ENCODE measurements at regions of chr9 and their contacts with region 1.

Region 1: DNA sequence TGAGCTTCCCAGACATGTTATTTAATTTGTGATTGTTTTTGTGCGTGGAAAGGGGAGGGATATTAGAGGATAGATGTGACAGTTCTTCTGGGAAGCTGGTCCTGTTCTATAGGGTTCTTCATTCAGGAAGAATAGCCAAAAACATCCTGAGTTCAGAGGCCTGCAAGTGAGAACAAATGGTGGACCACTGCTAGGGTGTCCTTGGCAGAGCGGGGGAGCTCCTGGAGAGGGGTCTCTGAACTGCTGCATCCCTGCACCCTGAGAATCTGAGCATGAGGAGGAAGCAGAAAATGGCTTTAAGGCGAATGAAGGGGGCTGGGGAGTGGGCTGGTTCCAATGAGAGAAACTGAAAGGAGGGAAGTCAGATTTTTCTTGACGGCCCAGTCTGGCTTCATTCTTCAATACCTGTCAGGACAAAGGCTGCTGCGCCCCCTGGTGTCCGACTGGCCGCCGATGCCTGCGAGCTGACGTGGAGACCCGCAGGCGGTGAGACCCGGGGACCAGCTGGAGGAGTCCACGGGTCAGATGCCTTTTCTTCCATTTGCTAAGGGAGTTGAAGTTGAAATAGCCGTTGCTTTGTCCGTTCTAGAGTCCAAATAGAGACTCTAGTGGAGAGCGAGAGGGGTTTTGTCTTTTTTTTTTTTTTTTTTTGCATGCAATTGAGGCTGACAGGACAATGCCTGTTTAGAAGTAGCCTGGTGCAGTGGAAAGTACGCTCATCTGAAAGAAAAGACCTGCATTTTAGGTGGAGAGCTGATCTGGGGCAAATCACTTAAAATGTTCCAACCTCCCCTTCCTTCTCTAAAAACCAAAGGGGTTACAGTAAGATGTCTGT is 39.5 kb upstream of the NFIB start:
- DNase-seq: peak; percentile 89
- H3K4me3 ChIP-seq: no peak overlapping the region
- H3K27ac ChIP-seq: peak overlapping the region; percentile 2
- H3K4me1 ChIP-seq: peaks cover 45% of the 10 kb centered on the region
- H3K27me3 ChIP-seq: no peaks in the 10 kb centered on the region
- CTCF ChIP-seq: peak; percentile 95 to 97
- POLR2A ChIP-seq: no peak

Region 2: DNA sequence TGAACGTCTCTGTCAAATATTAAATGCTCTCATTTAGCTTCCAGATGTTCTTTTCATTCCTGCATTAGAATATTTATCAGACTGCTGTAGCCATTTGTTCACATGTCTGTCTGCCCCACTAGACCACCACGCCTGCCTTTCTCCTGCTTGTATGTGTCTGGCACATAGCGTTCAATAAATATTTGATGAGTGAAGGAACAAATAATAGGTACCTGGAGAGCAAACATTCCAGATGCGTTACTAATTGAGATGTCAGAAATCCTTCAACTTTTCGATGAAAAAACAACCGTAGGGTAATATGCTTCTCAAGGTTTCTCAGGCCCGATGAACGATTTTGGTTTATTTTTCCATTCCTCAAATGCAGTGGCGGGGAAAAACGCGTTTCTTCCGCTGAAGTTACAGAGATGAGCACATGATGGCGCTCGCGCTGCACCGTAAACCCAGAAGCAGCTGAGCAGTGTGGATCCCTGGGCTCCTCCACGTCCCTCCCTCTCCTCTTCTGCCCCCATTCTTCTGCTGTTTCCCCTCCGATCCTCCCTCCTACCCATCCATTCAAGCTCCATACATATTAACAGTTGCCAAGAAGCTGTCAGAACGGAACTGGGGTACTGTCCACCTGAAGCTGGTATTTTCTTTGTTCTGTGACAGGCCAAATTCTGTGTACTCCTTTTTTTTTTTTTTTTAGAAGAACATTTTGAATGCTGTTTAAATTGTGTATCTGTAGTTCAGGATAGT is 1319.3 kb before region 1 on chr9:
- CTCF ChIA-PET with region 1: interaction called, 6 read pairs
- POLR2A ChIA-PET with region 1: no interaction called
- dilution Hi-C with region 1: no loop called
- intact Hi-C with region 1: loop called (anchors 10 kb)
- DNase-seq: peak; percentile 75
- H3K4me3 ChIP-seq: no peak overlapping the region
- H3K27ac ChIP-seq: no peak overlapping the region
- H3K4me1 ChIP-seq: no peaks in the 10 kb centered on the region
- H3K27me3 ChIP-seq: no peaks in the 10 kb centered on the region
- CTCF ChIP-seq: peak; percentile 77 to 81
- POLR2A ChIP-seq: no peak

Region 3: GRCh38 chr9:13446938-13447842 is 906.2 kb before region 1 on chr9:
- CTCF ChIA-PET with region 1: interaction called, 16 read pairs
- POLR2A ChIA-PET with region 1: no interaction called
- dilution Hi-C with region 1: no loop called
- intact Hi-C with region 1: loop called (anchors 2 kb)
- DNase-seq: peak; percentile 63
- H3K4me3 ChIP-seq: peak overlapping the region in 1 of 3 experiments; percentile 18
- H3K27ac ChIP-seq: no peak overlapping the region
- H3K4me1 ChIP-seq: peaks cover 14% of the 10 kb centered on the region
- H3K27me3 ChIP-seq: no peaks in the 10 kb centered on the region
- CTCF ChIP-seq: no peak
- POLR2A ChIP-seq: no peak

Region 4: GRCh38 chr9:13750061-13750460 is 603.4 kb before region 1 on chr9:
- CTCF ChIA-PET with region 1: no interaction called
- POLR2A ChIA-PET with region 1: no interaction called
- dilution Hi-C with region 1: no loop called
- intact Hi-C with region 1: loop called (anchors 5 kb)
- DNase-seq: peak; percentile 96
- H3K4me3 ChIP-seq: no peak overlapping the region
- H3K27ac ChIP-seq: peak overlapping the region; percentile 72
- H3K4me1 ChIP-seq: peaks cover 17% of the 10 kb centered on the region
- H3K27me3 ChIP-seq: no peaks in the 10 kb centered on the region
- CTCF ChIP-seq: no peak
- POLR2A ChIP-seq: peak; percentile 49

Region 5: GRCh38 chr9:14271093-14271673 is 82.3 kb before region 1 on chr9:
- CTCF ChIA-PET with region 1: interaction called, 5 read pairs
- POLR2A ChIA-PET with region 1: no interaction called
- dilution Hi-C with region 1: no loop called
- intact Hi-C with region 1: loop called (anchors 1 kb)
- DNase-seq: peak; percentile 95
- H3K4me3 ChIP-seq: peak overlapping the region in 1 of 3 experiments; percentile 33
- H3K27ac ChIP-seq: peak overlapping the region; percentile 46
- H3K4me1 ChIP-seq: peaks cover 64% of the 10 kb centered on the region
- H3K27me3 ChIP-seq: no peaks in the 10 kb centered on the region
- CTCF ChIP-seq: no peak
- POLR2A ChIP-seq: no peak

Region 6: DNA sequence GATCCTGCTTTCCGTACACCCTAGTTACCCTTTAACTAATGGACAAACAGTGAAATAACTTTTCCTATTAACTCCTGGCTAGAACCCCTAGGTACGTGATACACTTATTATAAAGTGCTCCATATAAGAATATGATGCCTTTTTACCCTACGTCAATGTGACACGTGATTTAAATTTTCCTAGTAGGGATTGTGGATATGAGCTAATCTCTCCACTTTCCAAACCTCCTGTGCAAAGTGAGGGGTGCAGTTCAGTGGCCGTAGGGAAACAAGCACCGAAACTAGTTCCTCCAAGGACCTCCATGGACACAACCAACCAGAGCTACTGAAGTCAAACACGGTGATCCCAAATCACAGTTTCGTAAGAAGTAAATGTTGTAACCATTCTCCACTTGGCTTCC is 58.8 kb before region 1 on chr9:
- CTCF ChIA-PET with region 1: no interaction called
- POLR2A ChIA-PET with region 1: no interaction called
- dilution Hi-C with region 1: no loop called
- intact Hi-C with region 1: no loop called
- DNase-seq: no peak
- H3K4me3 ChIP-seq: no peak overlapping the region
- H3K27ac ChIP-seq: no peak overlapping the region
- H3K4me1 ChIP-seq: peaks cover 17% of the 10 kb centered on the region
- H3K27me3 ChIP-seq: no peaks in the 10 kb centered on the region
- CTCF ChIP-seq: no peak
- POLR2A ChIP-seq: no peak

Region 7: GRCh38 chr9:14372437-14373335 is 19.2 kb after region 1 on chr9:
- CTCF ChIA-PET with region 1: interaction called, 60 read pairs
- POLR2A ChIA-PET with region 1: interaction called, 5 read pairs
- dilution Hi-C with region 1: no loop called
- intact Hi-C with region 1: loop called (anchors 1 kb)
- DNase-seq: peak; percentile 98
- H3K4me3 ChIP-seq: peak overlapping the region in 1 of 3 experiments; percentile 29
- H3K27ac ChIP-seq: peak overlapping the region; percentile 96
- H3K4me1 ChIP-seq: peaks cover 36% of the 10 kb centered on the region
- H3K27me3 ChIP-seq: no peaks in the 10 kb centered on the region
- CTCF ChIP-seq: no peak
- POLR2A ChIP-seq: peak; percentile 70

Region 8: GRCh38 chr9:14428781-14429230 is 75.4 kb after region 1 on chr9:
- CTCF ChIA-PET with region 1: interaction called, 25 read pairs
- POLR2A ChIA-PET with region 1: no interaction called
- dilution Hi-C with region 1: no loop called
- intact Hi-C with region 1: loop called (anchors 2 kb)
- DNase-seq: peak; percentile 68
- H3K4me3 ChIP-seq: no peak overlapping the region
- H3K27ac ChIP-seq: no peak overlapping the region
- H3K4me1 ChIP-seq: peaks cover 15% of the 10 kb centered on the region
- H3K27me3 ChIP-seq: no peaks in the 10 kb centered on the region
- CTCF ChIP-seq: peak; percentile 79 to 84
- POLR2A ChIP-seq: no peak

Region 9: DNA sequence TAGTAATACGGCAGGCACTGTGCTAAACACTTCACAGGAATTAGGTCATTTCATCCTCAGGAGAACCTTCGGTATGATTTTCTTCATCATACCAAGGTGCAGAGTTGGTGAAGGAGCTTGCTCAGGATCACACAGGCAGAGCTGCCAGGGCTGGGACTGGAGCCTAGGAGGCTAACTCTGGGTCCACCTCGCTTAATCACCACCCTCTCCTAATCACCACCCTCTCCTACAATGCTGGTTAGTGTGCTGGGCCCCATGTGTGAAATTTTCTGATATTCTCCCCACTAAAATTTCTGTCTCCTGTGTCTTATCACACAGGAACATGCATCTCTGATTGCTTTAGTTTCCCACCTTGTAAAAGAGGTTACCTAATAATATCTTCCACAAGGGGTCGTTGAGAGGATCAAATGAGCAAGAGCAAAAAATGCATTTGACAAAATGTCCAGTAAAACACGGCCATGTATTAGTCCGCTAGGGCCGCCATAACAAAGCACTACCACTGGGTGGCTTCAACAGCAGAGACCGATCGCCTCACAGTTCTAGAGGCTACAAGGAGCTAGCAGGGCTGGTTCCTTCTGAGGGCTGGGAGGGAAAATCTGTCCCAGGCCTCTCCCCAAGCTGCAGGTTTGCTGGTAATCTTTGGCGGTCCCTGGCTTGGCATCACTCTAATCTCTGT is 88.7 kb after region 1 on chr9:
- CTCF ChIA-PET with region 1: no interaction called
- POLR2A ChIA-PET with region 1: no interaction called
- dilution Hi-C with region 1: no loop called
- intact Hi-C with region 1: no loop called
- DNase-seq: no peak
- H3K4me3 ChIP-seq: no peak overlapping the region
- H3K27ac ChIP-seq: no peak overlapping the region
- H3K4me1 ChIP-seq: peaks cover 8% of the 10 kb centered on the region
- H3K27me3 ChIP-seq: no peaks in the 10 kb centered on the region
- CTCF ChIP-seq: peak in 1 of 2 donors; percentile 15
- POLR2A ChIP-seq: no peak